ENCODE measurements at regions of chr11 and their contacts with region 1.

Region 1: GRCh38 chr11:77547863-77548551 is 41.7 kb upstream of the AQP11 start:
- DNase-seq: peak; percentile 77
- H3K4me3 Mint-ChIP-seq: no peak overlapping the region
- H3K27ac Mint-ChIP-seq: no peak overlapping the region
- H3K4me1 Mint-ChIP-seq: no peaks in the 10 kb centered on the region
- H3K27me3 Mint-ChIP-seq: no peaks in the 10 kb centered on the region

Region 2: DNA sequence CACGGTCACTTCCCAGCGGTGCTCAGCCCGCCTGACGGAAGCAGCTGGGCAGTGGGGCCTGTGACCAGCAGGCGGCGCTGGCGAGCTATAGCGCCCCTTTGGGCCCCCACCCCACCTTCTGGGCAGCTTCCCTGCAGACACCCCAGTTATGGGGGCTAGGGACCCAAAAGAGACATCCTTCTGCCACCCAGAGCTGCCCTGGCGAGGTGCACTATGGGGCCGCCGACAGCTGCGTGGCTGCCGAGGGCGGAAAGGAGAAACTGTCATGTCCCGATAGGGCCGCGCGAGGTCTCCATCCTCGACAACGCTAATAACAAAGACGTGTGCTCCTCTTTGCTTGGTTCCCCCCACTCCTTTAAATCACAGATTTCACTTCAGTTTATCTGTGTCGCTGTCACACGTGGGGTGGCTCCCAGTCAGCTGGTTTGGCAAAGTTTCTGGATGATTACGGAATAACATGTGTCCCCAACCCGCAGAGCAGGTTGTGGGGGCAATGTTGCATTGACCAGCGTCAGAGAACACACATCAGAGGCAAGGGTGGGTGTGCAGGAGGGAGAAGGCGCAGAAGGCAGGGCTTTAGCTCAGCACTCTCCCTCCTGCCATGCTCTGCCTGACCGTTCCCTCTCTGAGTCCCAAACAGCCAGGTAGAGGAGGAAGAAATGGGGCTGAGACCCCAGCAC is 420.6 kb before region 1 on chr11:
- intact Hi-C with region 1: loop called (anchors 2 kb)
- DNase-seq: peak; percentile 89
- H3K4me3 Mint-ChIP-seq: peak overlapping the region; percentile 73
- H3K27ac Mint-ChIP-seq: no peak overlapping the region
- H3K4me1 Mint-ChIP-seq: peaks cover 7% of the 10 kb centered on the region
- H3K27me3 Mint-ChIP-seq: peaks cover 5% of the 10 kb centered on the region

Region 3: DNA sequence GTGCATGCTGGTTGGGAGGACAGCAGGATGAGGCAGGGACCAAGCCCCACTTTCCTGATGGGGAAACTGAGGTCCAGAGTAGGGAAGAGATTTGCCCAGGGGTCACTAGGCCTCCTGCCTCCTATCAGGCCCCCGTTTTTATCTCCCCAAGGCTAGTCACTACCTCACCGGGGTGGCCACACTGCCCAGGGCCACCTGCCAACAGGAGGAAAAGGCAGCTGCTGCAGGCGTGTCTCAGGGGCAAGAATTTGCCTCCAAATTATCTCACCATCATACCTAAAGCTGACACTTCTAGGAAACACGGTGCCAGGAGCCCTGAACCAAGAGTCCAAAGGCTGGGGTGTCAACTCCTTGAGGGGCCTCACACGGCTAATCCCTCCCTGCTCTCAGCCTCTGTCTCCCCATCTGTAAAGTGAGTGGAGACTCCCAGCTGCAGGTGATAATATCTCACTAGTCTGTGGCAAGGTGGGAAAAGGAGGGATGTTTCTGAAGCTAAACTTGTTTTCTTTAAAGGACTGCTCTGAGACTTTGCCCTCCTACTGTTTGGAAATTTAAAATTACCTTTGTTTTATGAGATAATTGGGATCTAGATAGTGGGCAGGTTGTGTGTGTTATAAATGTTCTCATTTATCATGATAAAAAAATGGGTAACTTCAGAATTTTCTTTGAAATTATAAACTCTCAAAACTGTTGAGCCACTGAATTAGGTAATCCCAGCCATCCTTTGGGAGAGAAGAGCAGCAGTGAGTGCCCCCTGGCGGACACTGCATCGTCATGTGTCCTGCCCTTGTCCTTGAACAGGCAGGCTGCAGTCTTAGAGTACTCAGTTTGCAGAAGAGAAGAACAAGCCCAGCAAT is 360.0 kb before region 1 on chr11:
- intact Hi-C with region 1: loop called (anchors 1 kb)
- DNase-seq: peak; percentile 90
- H3K4me3 Mint-ChIP-seq: no peak overlapping the region
- H3K27ac Mint-ChIP-seq: no peak overlapping the region
- H3K4me1 Mint-ChIP-seq: no peaks in the 10 kb centered on the region
- H3K27me3 Mint-ChIP-seq: no peaks in the 10 kb centered on the region

Region 4: GRCh38 chr11:77446911-77447629 is 100.9 kb before region 1 on chr11:
- intact Hi-C with region 1: loop called (anchors 1 kb)
- DNase-seq: no peak
- H3K4me3 Mint-ChIP-seq: no peak overlapping the region
- H3K27ac Mint-ChIP-seq: no peak overlapping the region
- H3K4me1 Mint-ChIP-seq: peaks cover 37% of the 10 kb centered on the region
- H3K27me3 Mint-ChIP-seq: no peaks in the 10 kb centered on the region

Region 5: DNA sequence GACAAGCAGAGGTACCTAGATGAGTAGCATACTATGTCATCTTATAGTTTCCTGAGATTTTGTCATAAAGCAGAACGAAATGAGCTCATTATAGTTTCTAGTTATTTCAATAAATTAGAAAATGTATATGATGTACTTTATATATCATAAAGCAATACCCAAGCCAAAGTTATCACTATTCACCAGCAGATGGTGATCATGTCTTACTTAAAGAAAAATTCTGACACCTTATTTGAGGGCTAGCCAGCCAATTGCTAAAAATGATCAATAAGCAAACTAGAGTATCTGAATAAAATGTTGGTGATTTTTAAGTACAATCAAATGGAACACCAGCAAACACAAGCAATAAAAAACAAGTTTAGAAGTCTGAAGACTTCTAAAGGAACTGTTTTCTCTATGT is 228.4 kb after region 1 on chr11:
- intact Hi-C with region 1: no loop called
- DNase-seq: no peak
- H3K4me3 Mint-ChIP-seq: no peak overlapping the region
- H3K27ac Mint-ChIP-seq: no peak overlapping the region
- H3K4me1 Mint-ChIP-seq: peaks cover 10% of the 10 kb centered on the region
- H3K27me3 Mint-ChIP-seq: no peaks in the 10 kb centered on the region

Measured in activated CD4-positive, alpha-beta T cell treated with anti-CD3 and anti-CD28 coated beads, Interleukin-2, amount 10 ng/mL, durations not matched to agents 24 days and 14 days (primary cell).